PC-9 (cell line): ENCODE measurements at regions of chr17 and their contacts with region 1.

Region 1: DNA sequence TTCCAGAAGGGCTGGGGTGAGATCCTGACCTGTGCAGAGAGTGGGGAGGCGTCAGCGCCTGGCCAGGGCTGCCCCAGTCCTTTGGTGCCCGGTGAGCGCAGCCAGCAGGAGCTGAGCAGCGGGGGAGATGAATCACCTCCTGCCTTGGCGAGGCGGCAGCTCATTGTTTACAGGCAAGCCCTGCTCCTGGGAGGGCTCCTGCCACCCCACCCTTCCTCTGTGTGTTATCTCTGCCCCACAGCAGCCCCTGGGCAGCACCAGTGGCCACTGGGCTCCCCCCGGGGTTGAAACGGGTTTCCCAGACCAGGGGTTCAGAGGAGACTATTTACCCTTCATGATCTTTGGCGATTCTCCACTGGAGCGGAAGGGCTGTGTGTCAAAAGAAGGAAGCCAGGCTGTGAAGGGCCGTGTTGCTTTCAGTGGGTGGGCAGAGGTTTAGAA is 14.1 kb upstream of the ITGB4 start:
- DNase-seq: peak; percentile 93 to 95
- H3K4me3 ChIP-seq: no peak overlapping the region
- H3K27ac ChIP-seq: peak overlapping the region; percentile 71
- H3K4me1 ChIP-seq: peaks cover 35% of the 10 kb centered on the region
- H3K27me3 ChIP-seq: no peaks in the 10 kb centered on the region
- CTCF ChIP-seq: no peak

Region 2: GRCh38 chr17:75524953-75525719 is 182.0 kb before region 1 on chr17 and contains the start of gene LLGL2:
- CTCF ChIA-PET with region 1: no interaction called
- POLR2A ChIA-PET with region 1: no interaction called
- intact Hi-C with region 1: no loop called
- DNase-seq: peak; percentile 77 to 95
- H3K4me3 ChIP-seq: peak within 1 kb of the TSS; percentile 100
- H3K27ac ChIP-seq: peak within 1 kb of the TSS; percentile 55
- H3K4me1 ChIP-seq: peaks cover 21% of the 10 kb centered on the region
- H3K27me3 ChIP-seq: no peaks in the 10 kb centered on the region
- CTCF ChIP-seq: peak; percentile 60
- total RNA-seq, gene LLGL2: 138 and 156 TPM in 2 replicates

Region 3: DNA sequence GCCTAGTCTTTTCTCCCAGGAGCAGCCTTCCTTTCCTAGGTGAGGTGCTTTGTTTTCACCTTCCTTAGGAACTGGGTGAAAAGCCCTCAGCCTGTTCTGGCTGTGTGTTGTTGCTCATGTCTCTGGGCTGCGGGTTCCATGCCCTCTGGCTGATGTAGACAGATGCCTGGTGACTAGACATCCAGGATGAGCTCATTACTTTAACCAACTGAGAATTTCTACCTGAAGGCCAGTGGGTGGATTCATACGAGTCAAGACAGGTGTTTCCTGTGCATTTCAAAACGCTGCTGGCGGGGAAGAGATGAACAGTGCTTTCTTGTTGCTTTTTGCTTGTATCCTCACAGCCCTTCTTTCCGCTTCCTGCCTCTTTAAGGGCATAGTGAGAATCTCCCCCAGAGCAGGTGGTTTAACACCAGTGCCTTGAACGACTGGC is 17.7 kb before region 1 on chr17:
- CTCF ChIA-PET with region 1: interaction called, 5 read pairs
- POLR2A ChIA-PET with region 1: interaction called, 18 read pairs
- intact Hi-C with region 1: no loop called
- DNase-seq: peak; percentile 57 to 96
- H3K4me3 ChIP-seq: peak overlapping the region; percentile 28; the same call in 1 of the 2 replicates
- H3K27ac ChIP-seq: peak overlapping the region; percentile 84
- H3K4me1 ChIP-seq: peaks cover 64% of the 10 kb centered on the region
- H3K27me3 ChIP-seq: no peaks in the 10 kb centered on the region
- CTCF ChIP-seq: no peak

Region 4: GRCh38 chr17:75749545-75750389 is 42.6 kb after region 1 on chr17:
- CTCF ChIA-PET with region 1: interaction called, 11 read pairs
- POLR2A ChIA-PET with region 1: no interaction called
- intact Hi-C with region 1: no loop called
- DNase-seq: peak in 1 of 2 experiments; percentile 64
- H3K4me3 ChIP-seq: no peak overlapping the region
- H3K27ac ChIP-seq: no peak overlapping the region
- H3K4me1 ChIP-seq: 0 out of 2 replicates have a peak, but pooled peaks cover 3% of the 10 kb centered on the region
- H3K27me3 ChIP-seq: no peaks in the 10 kb centered on the region
- CTCF ChIP-seq: peak; percentile 92

Region 5: GRCh38 chr17:75784473-75785015 is 77.4 kb after region 1 on chr17 and contains the start of gene UNK:
- CTCF ChIA-PET with region 1: no interaction called
- POLR2A ChIA-PET with region 1: interaction called, 15 read pairs
- intact Hi-C with region 1: no loop called
- DNase-seq: peak; percentile 96
- H3K4me3 ChIP-seq: peak within 1 kb of the TSS; percentile 72
- H3K27ac ChIP-seq: peak within 1 kb of the TSS; percentile 94
- H3K4me1 ChIP-seq: peaks cover 52% of the 10 kb centered on the region
- H3K27me3 ChIP-seq: no peaks in the 10 kb centered on the region
- CTCF ChIP-seq: no peak
- total RNA-seq, gene UNK: 25.3 and 27.8 TPM in 2 replicates

Region 6: GRCh38 chr17:76612977-76613851 is 906.1 kb after region 1 on chr17:
- CTCF ChIA-PET with region 1: no interaction called
- POLR2A ChIA-PET with region 1: interaction called, 23 read pairs
- intact Hi-C with region 1: no loop called
- DNase-seq: peak; percentile 94 to 95
- H3K4me3 ChIP-seq: no peak overlapping the region
- H3K27ac ChIP-seq: no peak overlapping the region
- H3K4me1 ChIP-seq: peaks cover 28% of the 10 kb centered on the region
- H3K27me3 ChIP-seq: no peaks in the 10 kb centered on the region
- CTCF ChIP-seq: peak; percentile 56